ENCODE measurements at regions of chr12 and their contacts with region 1.

Region 1: GRCh38 chr12:51424662-51425438 is at the start of gene SLC4A8:
- DNase-seq: peak; percentile 92
- ATAC-seq: peak; percentile 94
- total RNA-seq, gene SLC4A8: 0.08 TPM

Region 2: DNA sequence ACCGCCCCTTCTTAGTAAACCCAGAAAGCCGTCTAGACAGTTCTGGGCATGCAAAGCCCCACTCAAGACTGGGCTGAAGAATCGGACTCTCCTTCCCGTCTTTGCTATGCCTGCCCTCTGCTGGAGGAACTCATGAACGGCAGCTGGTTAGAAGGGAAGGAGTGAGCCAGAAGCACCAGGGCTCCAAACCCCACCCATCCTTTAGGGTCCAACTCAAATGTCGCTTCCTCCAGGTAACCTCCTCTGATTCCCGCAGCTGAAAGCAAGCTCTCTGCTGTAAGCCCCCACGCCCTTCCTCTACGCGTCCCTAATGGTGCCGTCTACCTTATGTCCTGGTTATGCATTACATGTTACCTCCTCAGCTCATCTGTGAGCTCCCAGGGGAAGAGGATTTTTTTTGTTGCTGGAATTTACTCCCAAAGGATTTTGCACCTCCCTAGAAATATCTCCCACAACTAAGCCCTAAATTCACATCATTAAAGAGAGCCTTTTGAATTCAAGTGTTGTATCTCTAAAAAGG is 107.2 kb after region 1 on chr12:
- intact Hi-C with region 1: loop called (anchors 1 kb)
- DNase-seq: no peak
- ATAC-seq: peak; percentile 83

Region 3: DNA sequence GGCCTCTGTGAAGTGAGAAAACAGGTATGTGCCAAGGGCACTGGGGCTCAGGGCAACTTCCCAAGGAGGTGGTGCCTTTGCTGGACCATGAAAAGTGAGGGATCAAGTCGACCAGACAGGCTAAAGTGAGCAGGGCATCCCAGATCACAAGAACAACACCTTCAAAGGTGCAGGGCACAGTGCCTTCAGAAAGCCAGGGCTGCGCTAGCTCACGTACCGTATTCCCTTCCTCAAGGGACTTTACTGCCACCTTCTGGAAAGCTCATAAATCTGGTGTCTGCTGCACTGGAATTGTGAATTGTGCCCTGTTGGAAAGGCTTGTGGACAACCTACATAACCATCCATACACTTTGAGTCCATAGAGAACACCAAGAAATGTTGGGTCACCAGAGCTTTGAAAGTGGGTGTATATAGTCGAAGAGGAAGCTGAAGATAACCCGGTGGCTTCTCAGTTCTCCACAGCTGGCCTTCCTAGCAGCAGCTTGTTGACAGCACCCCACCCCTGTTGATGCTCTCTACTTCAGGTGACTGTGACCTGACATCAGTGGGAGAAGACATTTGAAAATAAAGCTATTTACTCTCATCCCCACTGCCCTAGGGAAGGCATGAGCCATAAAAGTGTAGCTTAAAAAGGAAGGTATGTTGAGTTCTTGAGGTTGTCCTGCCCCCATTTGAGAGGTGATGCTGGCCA is 399.2 kb after region 1 on chr12:
- intact Hi-C with region 1: loop called (anchors 5 kb)
- DNase-seq: no peak
- ATAC-seq: no peak

Region 4: GRCh38 chr12:51879102-51879501 is 454.3 kb after region 1 on chr12:
- intact Hi-C with region 1: loop called (anchors 5 kb)
- DNase-seq: no peak
- ATAC-seq: no peak

Measured in Right ventricle myocardium inferior (tissue), 1 donor.